CD4-positive, alpha-beta T cell (primary cell): ENCODE measurements at regions of chr17 and their contacts with region 1.

Region 1: DNA sequence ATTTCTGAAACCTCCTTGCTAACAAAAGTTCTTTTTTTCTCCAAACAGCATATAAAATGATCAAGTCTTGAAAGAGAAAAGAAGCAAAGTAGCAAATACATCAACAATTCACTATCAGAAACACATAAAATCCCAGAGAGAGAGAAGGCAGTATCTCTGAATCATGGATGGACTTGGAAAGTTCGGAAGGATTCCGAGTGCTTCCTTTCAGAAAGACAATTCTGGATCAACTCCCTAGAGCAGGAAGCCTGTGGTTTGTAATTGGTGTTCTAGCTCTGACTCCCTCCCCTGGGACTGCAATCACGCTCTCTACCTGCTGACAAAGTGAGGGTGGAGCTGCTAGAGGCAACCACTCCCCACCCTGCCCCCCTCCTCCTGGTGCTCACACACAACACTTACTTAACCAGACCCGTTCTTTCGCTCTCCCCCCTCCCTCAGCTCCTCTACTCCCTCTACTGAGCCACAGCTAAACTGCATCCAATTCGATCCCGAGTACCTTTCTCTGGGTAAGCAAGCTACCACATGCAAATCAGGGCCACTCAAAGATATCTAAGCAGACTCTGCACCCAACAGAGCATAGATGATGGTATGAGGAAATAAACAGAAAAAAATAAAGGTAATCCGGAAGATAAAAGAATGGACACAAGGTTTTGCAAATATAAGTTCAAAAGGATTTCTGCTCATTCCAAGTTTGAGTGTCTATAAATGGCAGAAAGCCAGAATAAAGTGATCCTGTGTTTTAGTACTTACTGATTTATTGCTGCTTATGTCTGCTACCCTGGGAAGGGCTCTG is at the start of gene RNF43:
- DNase-seq: peak; percentile 75 to 96 (median 86)
- ATAC-seq: peak; percentile 100
- H3K4me3 ChIP-seq: no peak within 1 kb of the TSS
- H3K4me3 Mint-ChIP-seq: no peak within 1 kb of the TSS
- H3K27ac ChIP-seq: no peak within 1 kb of the TSS
- H3K27ac Mint-ChIP-seq: peak within 1 kb of the TSS; percentile 8
- H3K4me1 ChIP-seq: peaks cover 7% of the 10 kb centered on the region
- H3K4me1 Mint-ChIP-seq: peaks cover 15% of the 10 kb centered on the region
- H3K27me3 ChIP-seq: no peaks in the 10 kb centered on the region
- H3K27me3 Mint-ChIP-seq: no peaks in the 10 kb centered on the region
- CTCF ChIP-seq: peak; percentile 72
- total RNA-seq, gene RNF43: 0.69 to 1.9 TPM

Region 2: DNA sequence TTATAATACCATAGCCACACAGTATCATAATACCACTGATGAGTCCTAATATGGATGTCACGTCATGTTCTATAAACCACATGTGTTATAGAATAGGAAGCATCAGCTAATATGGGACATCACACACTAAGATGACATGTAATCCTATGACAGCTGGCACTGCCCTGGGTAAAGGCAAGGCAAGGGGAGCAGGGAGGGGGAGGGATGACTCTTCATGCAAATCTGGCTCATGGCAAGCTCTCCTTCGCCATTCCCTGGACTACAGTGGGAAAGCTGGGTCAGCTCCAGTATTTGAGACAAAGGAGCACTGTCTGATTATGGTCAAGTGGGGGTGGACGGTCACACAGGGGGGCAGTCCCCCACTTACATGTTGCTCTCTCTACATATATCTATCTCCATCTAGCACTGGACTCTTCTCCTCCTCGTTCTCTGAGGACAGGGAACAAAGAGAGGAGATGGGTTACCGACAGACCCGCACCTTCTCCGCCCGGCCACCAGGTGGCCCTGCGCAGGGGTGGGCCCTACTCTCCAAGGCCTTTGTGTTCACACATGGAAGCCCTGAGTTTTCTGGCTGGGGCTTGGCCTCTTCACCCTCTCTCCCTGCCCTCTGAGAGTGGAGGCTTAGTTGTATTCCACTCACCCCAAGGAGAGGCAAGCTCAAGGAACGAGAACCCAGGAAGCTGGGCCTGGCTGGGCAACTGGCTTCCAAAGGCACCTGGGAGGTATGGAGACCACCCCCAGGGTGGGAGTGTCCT is 113.3 kb before region 1 on chr17:
- CTCF ChIA-PET with region 1: interaction called, 4 read pairs
- POLR2A ChIA-PET with region 1: interaction called, 10 read pairs
- intact Hi-C with region 1: no loop called
- DNase-seq: peak; percentile 38 to 78 (median 51)
- ATAC-seq: peak; percentile 95
- H3K4me3 ChIP-seq: no peak overlapping the region
- H3K4me3 Mint-ChIP-seq: no peak overlapping the region
- H3K27ac ChIP-seq: no peak overlapping the region
- H3K27ac Mint-ChIP-seq: no peak overlapping the region
- H3K4me1 ChIP-seq: peaks cover 8% of the 10 kb centered on the region
- H3K4me1 Mint-ChIP-seq: peaks cover 6% of the 10 kb centered on the region
- H3K27me3 ChIP-seq: no peaks in the 10 kb centered on the region
- H3K27me3 Mint-ChIP-seq: no peaks in the 10 kb centered on the region
- CTCF ChIP-seq: peak; percentile 71

Region 3: DNA sequence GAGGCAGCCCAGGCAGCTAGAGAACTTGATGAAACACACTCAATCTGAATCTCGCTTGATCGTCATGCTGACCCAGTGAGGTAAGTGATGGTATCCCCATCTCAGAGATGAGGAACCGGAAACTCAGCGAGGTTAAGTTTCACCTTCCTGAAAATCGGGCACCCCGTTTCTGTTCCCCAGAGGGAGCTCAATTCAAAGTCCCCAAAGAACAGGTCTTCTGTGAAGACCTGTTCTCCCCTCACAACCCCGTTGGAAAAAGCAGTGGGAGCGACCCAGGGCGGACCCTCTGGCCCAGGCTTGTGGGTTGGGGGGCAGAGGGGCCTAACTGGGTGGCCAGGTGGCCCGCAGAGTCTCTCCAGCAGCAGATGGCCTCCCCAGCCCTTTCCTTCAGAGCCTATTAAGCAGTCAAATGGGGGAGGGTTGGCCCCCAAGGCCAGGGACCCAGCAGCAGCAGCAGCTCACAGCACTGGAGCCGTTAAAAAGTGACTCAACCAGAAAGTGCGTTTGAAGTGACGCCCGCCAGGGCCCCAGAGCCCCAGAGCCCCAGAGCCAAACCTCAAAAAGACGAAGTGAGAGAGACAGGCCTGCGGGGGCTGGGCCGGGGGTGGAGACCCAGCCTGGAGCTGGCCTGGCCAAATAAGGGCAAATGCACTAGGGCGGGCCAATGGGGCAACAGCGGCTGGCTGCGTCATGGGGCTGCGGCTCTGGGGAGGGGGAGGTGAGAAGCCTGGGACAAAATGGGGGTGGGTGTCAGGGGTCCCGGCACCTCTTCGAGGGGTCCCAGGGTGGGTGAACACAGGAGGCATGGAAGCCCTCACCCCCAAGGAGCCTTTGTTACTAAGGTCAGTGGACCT is 79.7 kb before region 1 on chr17:
- CTCF ChIA-PET with region 1: interaction called, 11 read pairs
- POLR2A ChIA-PET with region 1: interaction called, 35 read pairs
- intact Hi-C with region 1: no loop called
- DNase-seq: peak; percentile 78 to 96 (median 88)
- ATAC-seq: peak; percentile 73
- H3K4me3 ChIP-seq: peak overlapping the region; percentile 84
- H3K4me3 Mint-ChIP-seq: peak overlapping the region; percentile 90
- H3K27ac ChIP-seq: peak overlapping the region; percentile 97 to 98
- H3K27ac Mint-ChIP-seq: peak overlapping the region; percentile 84
- H3K4me1 ChIP-seq: peaks cover 96% of the 10 kb centered on the region
- H3K4me1 Mint-ChIP-seq: peaks cover 92% of the 10 kb centered on the region
- H3K27me3 ChIP-seq: no peaks in the 10 kb centered on the region
- H3K27me3 Mint-ChIP-seq: no peaks in the 10 kb centered on the region
- CTCF ChIP-seq: no peak

Region 4: GRCh38 chr17:58352014-58352842 is 65.3 kb before region 1 on chr17 and contains the start of gene SUPT4H1:
- CTCF ChIA-PET with region 1: interaction called, 10 read pairs
- POLR2A ChIA-PET with region 1: interaction called, 51 read pairs
- intact Hi-C with region 1: loop called (anchors 1 kb)
- DNase-seq: peak; percentile 83 to 98 (median 90)
- ATAC-seq: peak; percentile 87
- H3K4me3 ChIP-seq: peak within 1 kb of the TSS; percentile 78
- H3K4me3 Mint-ChIP-seq: peak within 1 kb of the TSS; percentile 99
- H3K27ac ChIP-seq: peak within 1 kb of the TSS; percentile 82 to 85
- H3K27ac Mint-ChIP-seq: peak within 1 kb of the TSS; percentile 98
- H3K4me1 ChIP-seq: peaks cover 31% of the 10 kb centered on the region
- H3K4me1 Mint-ChIP-seq: peaks cover 56% of the 10 kb centered on the region
- H3K27me3 ChIP-seq: no peaks in the 10 kb centered on the region
- H3K27me3 Mint-ChIP-seq: no peaks in the 10 kb centered on the region
- CTCF ChIP-seq: no peak
- total RNA-seq, gene SUPT4H1: 46.5 to 47.0 TPM